Activated CD8-positive, alpha-beta T cell treated with anti-CD3 and anti-CD28 coated beads, Interleukin-2, amount 10 ng/mL, durations not matched to agents 7 days and 5 days (primary cell): ENCODE measurements at regions of chr15 and their contacts with region 1.

Region 1: GRCh38 chr15:89171136-89172072 is 50.0 kb downstream of the RLBP1 start:
- DNase-seq: peak; percentile 47
- ATAC-seq: no peak
- H3K4me3 Mint-ChIP-seq: no peak overlapping the region
- H3K27ac Mint-ChIP-seq: no peak overlapping the region
- H3K4me1 Mint-ChIP-seq: peaks cover 12% of the 10 kb centered on the region
- H3K27me3 Mint-ChIP-seq: no peaks in the 10 kb centered on the region

Region 2: GRCh38 chr15:89087830-89088604 is 83.4 kb before region 1 on chr15 and contains the start of gene ABHD2:
- CTCF ChIA-PET with region 1: interaction called, 16 read pairs
- POLR2A ChIA-PET with region 1: interaction called, 5 read pairs
- DNase-seq: peak; percentile 99
- ATAC-seq: peak; percentile 99
- H3K4me3 Mint-ChIP-seq: no peak within 1 kb of the TSS
- H3K27ac Mint-ChIP-seq: no peak within 1 kb of the TSS
- H3K4me1 Mint-ChIP-seq: peaks cover 31% of the 10 kb centered on the region
- H3K27me3 Mint-ChIP-seq: no peaks in the 10 kb centered on the region
- total RNA-seq, gene ABHD2: 71.3 to 71.9 TPM

Region 3: DNA sequence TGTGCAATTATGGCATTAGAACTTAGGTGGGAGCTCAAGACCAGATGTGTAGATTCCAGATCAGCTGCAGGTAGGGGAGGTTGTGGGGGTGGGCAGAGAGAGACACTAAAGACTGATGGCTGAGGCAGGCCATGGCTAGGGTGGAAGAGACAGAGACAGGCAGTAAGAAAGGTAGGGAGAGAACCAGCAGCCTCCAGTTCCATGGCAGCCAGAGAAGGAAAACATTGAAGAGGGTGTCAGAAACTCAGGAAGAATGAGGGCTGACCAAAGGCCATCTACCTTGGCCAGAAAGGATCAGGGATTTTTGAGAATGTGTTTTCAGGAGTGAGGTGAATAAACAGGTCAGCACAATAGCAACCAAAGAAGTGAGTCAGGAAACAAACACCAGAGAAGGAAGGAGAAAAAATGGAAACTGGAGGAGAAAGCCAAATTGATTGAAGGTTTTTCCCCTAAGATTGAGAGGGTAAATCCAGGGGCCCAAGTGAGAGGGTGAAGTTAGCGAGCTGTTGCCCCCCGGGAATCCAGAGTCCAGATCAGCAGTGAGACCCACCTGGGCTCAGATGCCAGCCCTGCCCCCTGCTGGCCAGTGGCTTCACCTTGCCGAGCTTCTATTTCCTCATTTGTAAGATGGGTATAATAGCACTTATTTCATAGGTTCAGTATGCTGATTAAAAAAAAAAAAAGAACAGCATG is 42.1 kb before region 1 on chr15:
- CTCF ChIA-PET with region 1: interaction called, 15 read pairs
- POLR2A ChIA-PET with region 1: no interaction called
- DNase-seq: peak; percentile 64
- ATAC-seq: no peak
- H3K4me3 Mint-ChIP-seq: no peak overlapping the region
- H3K27ac Mint-ChIP-seq: no peak overlapping the region
- H3K4me1 Mint-ChIP-seq: peaks cover 15% of the 10 kb centered on the region
- H3K27me3 Mint-ChIP-seq: no peaks in the 10 kb centered on the region

Region 4: DNA sequence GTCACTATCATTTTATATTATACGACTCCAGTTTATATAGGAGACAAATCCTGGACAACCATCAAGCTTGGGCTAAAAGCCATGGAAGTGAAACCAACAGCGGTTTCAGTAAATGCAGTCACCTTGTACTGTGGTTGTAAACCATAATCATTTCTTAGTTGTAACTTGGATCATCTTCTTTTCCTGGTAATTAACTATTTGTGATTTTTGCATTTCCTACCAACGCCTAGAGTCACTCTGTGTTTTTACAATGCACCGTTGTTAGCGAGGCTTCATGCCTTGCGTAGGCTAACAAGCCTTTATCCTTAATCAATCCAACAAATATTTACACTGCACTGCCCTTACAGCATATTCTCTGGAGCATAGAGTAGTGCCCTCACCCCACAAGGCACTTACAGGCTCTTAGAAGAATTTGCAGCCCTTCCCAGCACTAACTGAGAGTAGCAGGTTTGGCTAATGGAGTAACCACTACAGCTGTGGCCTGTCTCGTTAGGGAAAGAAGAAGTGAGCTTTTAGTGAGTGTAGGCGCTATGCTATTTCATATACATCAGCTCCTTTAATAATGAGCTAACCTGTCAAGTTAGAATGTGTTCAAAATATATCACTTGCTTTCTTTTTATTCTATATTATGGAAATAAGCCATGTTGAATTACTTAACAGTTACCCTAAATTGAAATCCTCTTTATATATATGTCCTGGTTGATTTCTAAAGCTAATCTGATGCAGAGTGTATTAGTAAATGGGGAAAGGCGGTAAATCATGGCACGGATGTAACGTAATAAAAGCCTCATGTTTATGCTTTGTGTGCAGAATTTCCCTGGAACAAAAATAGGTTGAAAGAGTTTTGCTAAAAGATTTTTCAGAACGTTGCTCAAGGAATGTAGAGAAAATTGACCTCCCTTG is 20.4 kb before region 1 on chr15:
- CTCF ChIA-PET with region 1: interaction called, 19 read pairs
- POLR2A ChIA-PET with region 1: no interaction called
- DNase-seq: no peak
- ATAC-seq: no peak
- H3K4me3 Mint-ChIP-seq: no peak overlapping the region
- H3K27ac Mint-ChIP-seq: no peak overlapping the region
- H3K4me1 Mint-ChIP-seq: peaks cover 9% of the 10 kb centered on the region
- H3K27me3 Mint-ChIP-seq: no peaks in the 10 kb centered on the region

Region 5: GRCh38 chr15:89157918-89158564 is 13.4 kb before region 1 on chr15:
- CTCF ChIA-PET with region 1: interaction called, 19 read pairs
- POLR2A ChIA-PET with region 1: no interaction called
- DNase-seq: no peak
- ATAC-seq: no peak
- H3K4me3 Mint-ChIP-seq: no peak overlapping the region
- H3K27ac Mint-ChIP-seq: no peak overlapping the region
- H3K4me1 Mint-ChIP-seq: peaks cover 3% of the 10 kb centered on the region
- H3K27me3 Mint-ChIP-seq: no peaks in the 10 kb centered on the region

Region 6: DNA sequence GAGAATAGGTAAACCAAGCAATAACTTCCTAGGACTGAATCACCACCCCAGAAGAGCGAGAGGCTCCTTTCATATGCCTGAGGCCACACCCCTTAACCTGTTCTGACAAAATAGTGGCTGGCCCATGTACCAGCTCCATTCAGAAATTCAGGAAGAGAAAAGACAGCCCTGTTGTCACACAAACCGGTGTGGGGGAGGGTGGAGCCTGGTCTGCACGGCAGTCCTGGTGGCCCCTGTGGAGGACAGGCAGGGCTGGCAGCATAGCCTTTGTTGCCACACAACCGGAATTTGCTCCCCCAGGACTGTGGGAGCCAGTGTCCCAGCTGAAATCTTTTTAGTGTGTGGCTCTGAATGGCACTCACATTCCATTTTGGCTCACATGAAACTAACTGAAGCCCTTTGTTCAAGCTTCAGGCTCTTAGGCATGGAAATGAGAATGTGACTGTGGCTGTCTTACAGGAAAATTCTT is 26.1 kb after region 1 on chr15:
- CTCF ChIA-PET with region 1: interaction called, 10 read pairs
- POLR2A ChIA-PET with region 1: no interaction called
- DNase-seq: no peak
- ATAC-seq: no peak
- H3K4me3 Mint-ChIP-seq: no peak overlapping the region
- H3K27ac Mint-ChIP-seq: no peak overlapping the region
- H3K4me1 Mint-ChIP-seq: peaks cover 12% of the 10 kb centered on the region
- H3K27me3 Mint-ChIP-seq: no peaks in the 10 kb centered on the region